ENCODE measurements at regions of chr20 and their contacts with region 1.

Region 1: DNA sequence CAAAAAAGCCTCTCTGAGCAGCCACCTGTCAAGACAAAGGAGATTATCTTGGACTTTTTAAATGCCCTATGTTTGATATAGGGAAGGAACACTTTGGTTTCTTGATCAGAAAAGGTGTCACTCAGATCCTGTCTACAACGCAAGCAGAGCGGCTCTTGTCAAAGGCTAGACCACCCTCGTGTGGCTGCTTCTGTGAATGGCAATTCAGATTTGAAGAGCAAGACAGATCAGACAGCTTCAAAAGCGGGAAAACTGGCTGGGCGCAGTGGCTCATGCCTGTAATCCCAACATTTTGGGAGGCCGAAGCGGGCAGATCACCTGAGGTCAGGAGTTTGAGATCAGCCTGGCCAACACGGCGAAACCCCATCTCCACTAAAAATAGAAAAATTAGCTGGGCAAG is 10.1 kb upstream of the NXT1 start:
- DNase-seq: peak; percentile 39 to 89 (median 73)

Region 2: GRCh38 chr20:23143098-23143497 is 197.4 kb before region 1 on chr20:
- intact Hi-C with region 1: loop called (anchors 5 kb)
- DNase-seq: peak in 10 of 42 donors; percentile 9 to 58 (median 29)